B cell (primary cell): ENCODE measurements at regions of chr17 and their contacts with region 1.

Region 1: GRCh38 chr17:79087428-79088143 is 13.0 kb downstream of the ENGASE start:
- DNase-seq: peak; percentile 80
- ATAC-seq: peak; percentile 86
- H3K4me3 ChIP-seq: no peak overlapping the region
- H3K4me3 Mint-ChIP-seq: no peak overlapping the region
- H3K27ac ChIP-seq: no peak overlapping the region
- H3K27ac Mint-ChIP-seq: no peak overlapping the region
- H3K4me1 ChIP-seq: no peaks in the 10 kb centered on the region
- H3K4me1 Mint-ChIP-seq: no peaks in the 10 kb centered on the region
- H3K27me3 ChIP-seq: no peaks in the 10 kb centered on the region
- H3K27me3 Mint-ChIP-seq: peaks cover 4% of the 10 kb centered on the region
- CTCF ChIP-seq: peak; percentile 92

Region 2: DNA sequence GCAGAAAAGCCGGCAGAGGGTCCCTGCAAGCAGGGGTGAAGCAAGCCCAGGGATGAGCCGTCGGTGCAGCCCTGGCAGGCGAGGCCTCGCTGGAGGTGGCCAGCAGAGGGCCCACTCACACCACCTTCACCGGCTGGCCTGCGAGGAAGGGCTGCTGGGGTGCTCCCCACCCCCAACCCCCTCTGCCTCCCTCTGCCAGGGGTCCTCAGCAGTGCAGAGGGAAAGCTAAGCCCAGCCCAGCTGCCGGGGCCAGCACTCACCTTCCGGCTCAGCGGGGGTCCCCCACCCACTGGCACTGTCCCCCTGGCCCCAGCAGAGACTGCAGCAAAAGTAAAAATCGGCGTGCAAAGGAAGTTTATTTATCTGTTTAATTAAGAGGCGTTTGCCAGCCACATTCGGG is 100.5 kb after region 1 on chr17:
- CTCF ChIA-PET with region 1: interaction called, 9 read pairs
- POLR2A ChIA-PET with region 1: no interaction called
- intact Hi-C with region 1: loop called (anchors 5 kb)
- DNase-seq: peak; percentile 53
- ATAC-seq: peak; percentile 51
- H3K4me3 ChIP-seq: no peak overlapping the region
- H3K4me3 Mint-ChIP-seq: no peak overlapping the region
- H3K27ac ChIP-seq: no peak overlapping the region
- H3K27ac Mint-ChIP-seq: no peak overlapping the region
- H3K4me1 ChIP-seq: peaks cover 0 to 4% of the 10 kb centered on the region in 2 donors
- H3K4me1 Mint-ChIP-seq: peaks cover 3% of the 10 kb centered on the region
- H3K27me3 ChIP-seq: peaks cover 0 to 53% (median 6%) of the 10 kb centered on the region in 4 experiments
- H3K27me3 Mint-ChIP-seq: peaks cover 49% of the 10 kb centered on the region
- CTCF ChIP-seq: peak; percentile 71

Region 3: DNA sequence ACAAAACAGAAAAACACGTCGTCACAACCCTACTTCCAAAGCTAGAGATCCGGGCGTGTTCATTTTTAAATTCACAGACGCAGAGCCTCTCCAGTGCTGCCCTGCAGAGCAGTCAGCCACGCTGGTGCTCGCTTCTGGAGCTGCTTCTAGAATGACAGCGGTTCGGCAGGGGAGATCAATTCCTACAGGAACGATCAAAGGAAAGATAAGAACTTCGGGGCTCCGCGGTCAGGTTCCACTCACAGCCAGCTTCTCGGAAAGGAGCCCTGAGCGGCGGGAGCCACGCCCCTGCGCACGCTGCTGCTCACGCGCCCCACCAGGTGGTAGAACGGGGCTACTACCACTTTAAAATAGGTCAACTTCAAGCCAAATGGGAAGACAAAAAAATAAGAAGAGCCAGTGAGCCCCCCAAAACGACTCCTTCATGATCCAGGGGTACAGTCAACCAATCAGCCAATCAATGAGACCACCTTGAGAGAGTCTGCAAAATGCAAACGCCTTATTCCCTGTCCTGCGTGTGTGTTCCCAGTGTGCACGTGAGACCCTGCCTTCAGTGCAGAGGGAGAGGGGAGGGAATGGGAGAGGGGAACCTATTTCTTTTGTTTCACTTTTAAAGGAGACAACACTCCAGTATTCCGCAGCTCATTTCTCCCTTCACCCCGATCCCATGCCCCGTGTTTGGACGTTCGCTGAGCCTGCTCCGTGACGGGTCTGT is 313.6 kb after region 1 on chr17:
- CTCF ChIA-PET with region 1: interaction called, 370 read pairs
- POLR2A ChIA-PET with region 1: interaction called, 4 read pairs
- intact Hi-C with region 1: loop called (anchors 1 kb)
- DNase-seq: peak; percentile 84
- ATAC-seq: peak; percentile 99
- H3K4me3 ChIP-seq: peak overlapping the region in 4 of 5 experiments; percentile 21 to 40 (median 36)
- H3K4me3 Mint-ChIP-seq: peak overlapping the region; percentile 61
- H3K27ac ChIP-seq: no peak overlapping the region
- H3K27ac Mint-ChIP-seq: no peak overlapping the region
- H3K4me1 ChIP-seq: peaks cover 6 to 7% of the 10 kb centered on the region in 2 donors
- H3K4me1 Mint-ChIP-seq: peaks cover 10% of the 10 kb centered on the region
- H3K27me3 ChIP-seq: peaks cover 0 to 41% (median 7%) of the 10 kb centered on the region in 4 experiments
- H3K27me3 Mint-ChIP-seq: peaks cover 47% of the 10 kb centered on the region
- CTCF ChIP-seq: peak; percentile 94